ENCODE measurements at regions of chr3 and their contacts with region 1.

Region 1: DNA sequence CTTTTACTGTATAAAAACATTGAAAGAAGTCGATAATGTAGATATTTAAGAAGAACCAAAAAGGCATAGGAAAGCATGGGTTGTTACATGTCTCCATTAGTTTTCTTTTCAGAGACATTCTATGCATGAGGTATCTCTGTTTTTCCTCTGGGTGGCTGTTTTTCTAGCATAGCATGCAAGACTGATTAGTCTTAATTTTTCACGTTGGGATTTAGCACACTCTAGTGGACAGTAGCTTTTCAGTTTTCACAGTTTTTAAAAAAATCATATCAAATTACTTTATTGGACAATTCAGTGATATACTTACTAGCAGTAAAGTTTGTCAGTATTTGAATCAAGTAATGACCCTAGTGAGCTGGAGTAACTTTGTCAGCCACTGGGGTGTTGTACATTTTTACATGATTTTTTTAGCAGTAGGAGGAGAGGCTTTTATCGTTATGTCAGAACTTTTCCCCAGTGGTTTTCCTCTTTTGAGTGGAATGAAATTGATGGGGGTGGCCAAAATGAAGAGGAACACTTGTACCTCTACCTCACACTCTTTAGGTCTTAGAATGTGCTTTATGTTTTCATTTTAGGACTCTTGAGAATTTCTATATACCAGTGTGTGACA is 57.2 kb downstream of the SEC22A start:
- DNase-seq: no peak
- ATAC-seq: peak; percentile 47
- H3K4me3 Mint-ChIP-seq: no peak overlapping the region
- H3K27ac Mint-ChIP-seq: no peak overlapping the region
- H3K4me1 Mint-ChIP-seq: no peaks in the 10 kb centered on the region
- H3K27me3 Mint-ChIP-seq: no peaks in the 10 kb centered on the region
- CTCF ChIP-seq: no peak

Region 2: DNA sequence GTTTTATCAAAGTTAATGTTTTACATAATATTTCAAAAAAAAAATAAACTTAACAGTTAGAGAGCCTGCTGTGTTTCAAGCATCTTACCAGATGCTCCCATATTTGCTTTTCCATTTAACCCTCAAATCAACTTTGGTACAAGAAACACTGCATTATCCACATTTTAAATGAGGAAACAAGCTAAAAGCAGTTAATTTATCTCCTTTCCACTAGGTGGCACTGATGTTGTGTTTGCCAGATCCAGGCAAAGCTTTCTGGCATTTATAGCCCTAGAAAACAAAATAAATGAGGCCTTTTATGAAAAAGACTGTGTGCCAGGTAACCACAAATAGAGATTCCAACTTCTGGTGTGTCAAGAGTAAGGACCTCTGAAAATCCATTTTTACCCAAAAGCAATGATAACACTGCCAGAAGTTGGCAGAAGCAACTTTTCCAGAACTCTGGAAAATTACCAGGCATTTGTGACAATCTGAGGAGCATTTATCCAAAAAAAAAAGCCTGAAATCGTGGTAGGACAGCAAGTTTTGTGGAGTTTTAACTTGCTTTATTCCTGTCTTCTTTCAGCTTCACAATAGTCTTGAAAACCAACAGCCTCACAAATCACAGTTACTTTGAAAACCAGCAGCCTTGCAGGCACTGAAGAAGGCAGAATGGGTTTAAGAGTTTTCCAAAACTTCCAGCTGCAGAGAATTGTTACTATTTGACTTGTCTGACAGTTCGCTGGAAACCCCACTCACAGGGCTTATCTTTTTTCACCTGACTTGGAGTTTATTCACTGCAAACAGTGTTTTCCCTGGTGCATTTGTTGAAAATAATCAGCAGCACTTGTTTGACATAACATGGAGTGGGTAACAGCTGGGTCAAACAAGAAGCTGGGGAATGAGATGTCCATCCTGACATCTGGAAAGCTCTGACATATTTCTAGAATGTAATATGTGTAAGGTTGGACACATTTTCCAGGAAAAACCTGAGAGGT is 865.8 kb before region 1 on chr3:
- CTCF ChIA-PET with region 1: no interaction called
- POLR2A ChIA-PET with region 1: no interaction called
- intact Hi-C with region 1: loop called (anchors 5 kb)
- DNase-seq: no peak
- ATAC-seq: no peak
- H3K4me3 Mint-ChIP-seq: no peak overlapping the region
- H3K27ac Mint-ChIP-seq: no peak overlapping the region
- H3K4me1 Mint-ChIP-seq: peaks cover 15% of the 10 kb centered on the region
- H3K27me3 Mint-ChIP-seq: no peaks in the 10 kb centered on the region
- CTCF ChIP-seq: peak; percentile 87

Region 3: DNA sequence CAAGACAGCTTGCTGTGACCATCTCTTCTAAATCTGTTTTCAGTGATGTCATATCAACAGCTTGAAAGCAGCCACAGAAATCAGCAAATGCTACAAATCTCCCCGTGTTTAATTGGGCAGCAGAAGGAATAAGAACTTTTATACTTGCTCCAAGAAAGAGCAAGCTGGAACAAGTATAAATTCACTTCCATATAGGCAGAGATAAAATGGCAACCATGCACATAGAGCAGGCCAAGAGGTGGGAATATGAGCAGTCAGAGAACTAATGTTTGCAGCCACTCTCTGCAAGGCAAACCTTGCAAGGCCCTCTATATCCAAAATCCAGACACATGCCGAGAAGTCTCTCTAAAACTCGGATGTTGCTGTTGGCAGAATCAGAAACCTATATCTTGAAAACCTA is 710.8 kb before region 1 on chr3:
- CTCF ChIA-PET with region 1: no interaction called
- POLR2A ChIA-PET with region 1: no interaction called
- intact Hi-C with region 1: loop called (anchors 5 kb)
- DNase-seq: no peak
- ATAC-seq: no peak
- H3K4me3 Mint-ChIP-seq: no peak overlapping the region
- H3K27ac Mint-ChIP-seq: no peak overlapping the region
- H3K4me1 Mint-ChIP-seq: no peaks in the 10 kb centered on the region
- H3K27me3 Mint-ChIP-seq: no peaks in the 10 kb centered on the region
- CTCF ChIP-seq: no peak

Region 4: DNA sequence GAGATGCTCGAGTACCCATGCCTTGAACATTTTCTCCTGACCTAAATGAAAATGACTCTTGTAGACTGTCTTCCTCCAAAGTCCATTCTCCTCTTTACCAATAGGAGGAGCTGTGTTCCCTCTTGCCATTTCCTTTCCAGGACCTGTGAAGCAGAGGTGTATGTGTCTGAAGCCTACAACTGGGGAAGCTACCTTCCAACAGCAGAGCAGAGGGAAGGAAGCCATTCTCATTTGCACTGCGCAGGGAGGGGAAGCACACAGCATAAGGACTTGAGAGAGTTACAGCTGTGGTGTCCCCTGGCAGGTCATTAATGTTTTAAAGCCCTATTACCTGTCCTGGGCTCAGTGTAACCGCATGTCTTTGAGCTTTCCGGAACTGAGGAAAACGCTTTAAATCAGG is 504.0 kb before region 1 on chr3:
- CTCF ChIA-PET with region 1: no interaction called
- POLR2A ChIA-PET with region 1: no interaction called
- intact Hi-C with region 1: loop called (anchors 10 kb)
- DNase-seq: no peak
- ATAC-seq: peak; percentile 79
- H3K4me3 Mint-ChIP-seq: no peak overlapping the region
- H3K27ac Mint-ChIP-seq: no peak overlapping the region
- H3K4me1 Mint-ChIP-seq: no peaks in the 10 kb centered on the region
- H3K27me3 Mint-ChIP-seq: no peaks in the 10 kb centered on the region
- CTCF ChIP-seq: peak; percentile 54

Region 5: DNA sequence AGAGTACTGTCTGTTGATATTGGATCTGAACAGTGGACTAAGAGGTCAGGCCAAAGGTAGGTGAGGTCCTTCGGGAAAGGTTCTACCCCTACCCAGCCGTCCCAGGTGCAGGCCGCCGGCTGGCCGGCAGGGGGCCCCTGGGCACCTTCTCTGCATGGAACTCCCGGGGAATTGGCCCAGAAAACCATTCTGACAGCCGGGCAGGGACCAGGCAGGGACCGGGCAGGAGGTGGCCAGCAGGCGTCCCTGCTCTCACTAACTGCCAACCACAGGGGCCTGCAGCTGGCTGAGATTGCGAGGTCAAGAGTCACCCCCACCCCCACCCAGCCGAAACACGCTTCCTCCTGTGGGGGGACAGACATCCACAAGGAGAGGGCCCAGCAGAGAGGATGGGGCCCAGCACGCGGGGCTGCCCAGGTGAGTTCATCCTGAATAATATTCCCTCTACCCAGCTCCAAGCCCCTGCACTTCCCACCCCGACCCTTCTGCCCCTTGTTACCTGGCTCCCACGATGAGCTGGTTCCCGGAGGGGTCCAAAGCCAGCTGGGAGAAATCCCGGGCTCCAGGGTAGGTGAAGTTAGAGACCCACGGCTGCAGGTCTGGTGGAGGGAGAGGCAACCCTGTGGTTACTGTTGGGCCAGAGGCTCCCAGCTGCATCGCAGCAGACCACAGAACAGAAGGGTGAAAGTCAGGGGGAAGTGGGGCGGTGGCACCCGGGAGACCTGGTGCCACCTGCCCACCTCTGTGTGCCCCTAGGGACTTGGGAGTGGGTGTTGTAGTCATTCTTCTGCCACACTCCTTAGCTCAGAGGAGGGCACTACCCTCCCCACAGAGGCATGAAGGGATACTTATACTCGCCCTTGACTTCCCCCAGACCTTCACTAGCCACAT is 315.7 kb before region 1 on chr3:
- CTCF ChIA-PET with region 1: no interaction called
- POLR2A ChIA-PET with region 1: no interaction called
- intact Hi-C with region 1: loop called (anchors 5 kb)
- DNase-seq: peak; percentile 38
- ATAC-seq: peak; percentile 59
- H3K4me3 Mint-ChIP-seq: no peak overlapping the region
- H3K27ac Mint-ChIP-seq: no peak overlapping the region
- H3K4me1 Mint-ChIP-seq: peaks cover 27% of the 10 kb centered on the region
- H3K27me3 Mint-ChIP-seq: no peaks in the 10 kb centered on the region
- CTCF ChIP-seq: no peak

Region 6: GRCh38 chr3:123627673-123628670 is 369.1 kb after region 1 on chr3:
- CTCF ChIA-PET with region 1: no interaction called
- POLR2A ChIA-PET with region 1: no interaction called
- intact Hi-C with region 1: no loop called
- DNase-seq: no peak
- ATAC-seq: no peak
- H3K4me3 Mint-ChIP-seq: no peak overlapping the region
- H3K27ac Mint-ChIP-seq: no peak overlapping the region
- H3K4me1 Mint-ChIP-seq: no peaks in the 10 kb centered on the region
- H3K27me3 Mint-ChIP-seq: no peaks in the 10 kb centered on the region
- CTCF ChIP-seq: no peak

Measured in activated B cell treated with CpG ODN at 0.5 μM for 24 hours (primary cell).